Transverse colon (tissue), 4 donors: ENCODE measurements at regions of chr11 and their contacts with region 1.

Region 1: DNA sequence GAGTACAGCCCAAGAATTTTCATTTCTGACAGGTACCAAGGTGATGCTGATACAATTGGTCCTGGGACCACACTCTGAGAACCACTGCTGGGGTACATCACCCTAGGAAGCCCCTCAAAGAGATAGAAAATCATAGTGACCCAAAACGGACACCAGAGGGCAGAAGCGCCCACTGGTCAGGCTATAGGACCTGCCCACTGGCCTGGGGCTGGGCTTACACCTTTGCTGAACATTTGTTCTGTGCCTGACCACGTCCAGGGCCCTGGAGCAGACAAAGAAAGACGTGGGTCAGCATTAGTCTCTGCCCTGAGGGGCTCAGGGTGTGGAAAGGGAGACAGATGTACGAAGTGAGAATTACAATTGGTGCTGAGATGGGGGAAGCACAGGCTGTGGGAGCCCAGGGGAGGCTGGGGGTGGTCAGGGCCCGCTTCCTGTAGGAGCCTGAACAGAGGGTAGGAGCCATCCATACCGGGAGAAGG is 14.4 kb upstream of the SERPINH1 start:
- DNase-seq: peak; percentile 72
- H3K4me3 ChIP-seq: no peak overlapping the region
- H3K27ac ChIP-seq: peak overlapping the region in 1 of 4 donors; percentile 14
- H3K4me1 ChIP-seq: peaks cover 0 to 3% (median 1%) of the 10 kb centered on the region in 4 donors
- H3K27me3 ChIP-seq: no peaks in the 10 kb centered on the region
- CTCF ChIP-seq: peak; percentile 77 to 90 (median 84)
- EP300 ChIP-seq: no peak
- POLR2A ChIP-seq: no peak

Region 2: DNA sequence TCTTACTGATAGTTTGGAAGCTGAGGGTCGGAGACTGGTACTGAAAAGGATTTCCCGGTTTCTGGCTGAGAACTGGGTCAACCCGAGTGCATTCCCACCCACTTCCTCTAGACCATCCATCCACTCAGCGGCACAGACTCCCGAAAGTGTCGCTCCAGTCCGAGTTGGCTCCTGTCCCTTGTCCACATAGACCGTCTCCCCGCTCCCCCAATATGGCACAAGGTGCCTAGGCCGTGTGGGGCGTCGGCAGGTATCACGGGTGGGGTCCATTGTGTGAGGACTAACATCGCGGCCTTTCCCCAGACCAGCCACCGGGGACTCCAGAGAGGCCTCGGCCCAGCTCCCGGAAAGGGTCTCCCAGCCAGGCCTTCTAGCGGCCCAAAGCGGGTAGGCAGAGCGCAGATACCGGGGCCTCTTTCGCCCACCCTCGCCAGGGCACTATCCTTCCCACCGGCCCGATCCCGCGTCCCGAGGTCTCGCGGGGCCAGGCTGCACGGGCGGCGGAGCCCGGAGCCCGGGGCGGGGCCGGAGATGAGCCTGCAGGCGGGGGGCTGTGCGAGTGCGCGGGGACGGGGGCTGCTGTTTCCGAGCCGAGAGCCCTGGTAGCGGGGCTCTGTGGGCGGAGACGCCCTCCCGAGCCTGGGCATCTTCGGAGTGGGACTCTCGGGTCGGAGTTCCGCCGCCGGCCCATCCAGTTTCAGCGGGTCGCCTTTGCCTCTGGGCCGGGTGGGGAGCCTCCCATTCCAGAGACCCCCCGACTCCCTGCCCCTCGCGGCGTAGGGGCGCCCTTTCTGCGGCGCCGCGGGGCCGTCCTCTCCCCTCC is 35.5 kb after region 1 on chr11:
- in situ Hi-C with region 1: no loop called
- intact Hi-C with region 1: loop called (anchors 5 kb)
- DNase-seq: peak; percentile 57
- H3K4me3 ChIP-seq: peak overlapping the region; percentile 20 to 71 (median 64)
- H3K27ac ChIP-seq: peak overlapping the region; percentile 87 to 95 (median 92)
- H3K4me1 ChIP-seq: peaks cover 0 to 13% (median 4%) of the 10 kb centered on the region in 4 donors
- H3K27me3 ChIP-seq: peaks cover 9% of the 10 kb centered on the region
- CTCF ChIP-seq: peak in 4 of 5 experiments; percentile 25 to 54 (median 40)
- EP300 ChIP-seq: no peak
- POLR2A ChIP-seq: no peak

Region 3: DNA sequence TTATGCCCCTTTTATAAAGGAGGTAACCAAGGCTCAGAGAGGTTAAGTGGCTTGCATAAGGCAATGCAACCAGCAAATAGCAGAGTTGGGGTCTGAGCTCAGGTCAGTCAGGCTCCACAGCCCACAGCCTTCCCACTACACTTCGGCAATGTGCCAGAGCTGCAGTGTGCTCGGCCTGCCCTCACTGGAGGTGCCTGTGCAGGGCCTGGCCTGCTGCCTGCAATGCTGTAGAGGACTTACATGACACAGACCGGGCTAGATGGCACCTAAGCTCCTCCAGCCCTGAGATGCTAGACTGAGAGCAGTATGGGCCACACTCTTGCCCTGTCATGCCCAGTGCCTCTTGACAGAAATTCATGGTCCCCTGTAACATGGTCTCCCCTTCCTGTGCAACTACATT is 64.2 kb after region 1 on chr11:
- in situ Hi-C with region 1: no loop called
- intact Hi-C with region 1: loop called (anchors 2 kb)
- DNase-seq: no peak
- H3K4me3 ChIP-seq: no peak overlapping the region
- H3K27ac ChIP-seq: no peak overlapping the region
- H3K4me1 ChIP-seq: no peaks in the 10 kb centered on the region
- H3K27me3 ChIP-seq: no peaks in the 10 kb centered on the region
- CTCF ChIP-seq: no peak
- EP300 ChIP-seq: no peak
- POLR2A ChIP-seq: no peak